Aorta (tissue), 5 donors: ENCODE measurements at regions of chr18 and their contacts with region 1.

Region 1: DNA sequence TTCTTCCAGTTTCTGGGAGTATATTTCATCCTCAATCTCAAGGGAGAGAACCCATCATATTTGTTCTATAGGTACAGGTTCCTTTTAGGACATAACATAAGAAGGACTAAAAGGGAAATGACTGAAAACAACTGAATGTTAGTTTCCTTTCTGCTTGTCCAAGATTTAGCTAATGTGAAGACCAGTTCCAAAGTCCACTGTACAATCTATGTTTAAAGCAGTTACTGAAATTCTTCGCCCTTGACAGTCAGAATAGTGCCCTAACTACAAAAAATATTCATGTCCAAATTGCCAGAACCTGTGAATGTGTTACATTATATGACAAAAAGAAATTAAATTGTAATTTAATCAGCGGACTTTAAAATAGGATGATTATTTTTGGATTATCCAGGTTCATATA is 466.3 kb upstream of the SETBP1 start:
- DNase-seq: no peak
- ATAC-seq: no peak
- H3K4me3 ChIP-seq: no peak overlapping the region
- H3K27ac ChIP-seq: no peak overlapping the region
- H3K4me1 ChIP-seq: no peaks in the 10 kb centered on the region
- H3K27me3 ChIP-seq: no peaks in the 10 kb centered on the region

Region 2: GRCh38 chr18:44107187-44107586 is 107.2 kb before region 1 on chr18:
- intact Hi-C with region 1: no loop called
- DNase-seq: no peak
- ATAC-seq: no peak
- H3K4me3 ChIP-seq: no peak overlapping the region
- H3K27ac ChIP-seq: no peak overlapping the region
- H3K4me1 ChIP-seq: no peaks in the 10 kb centered on the region
- H3K27me3 ChIP-seq: no peaks in the 10 kb centered on the region

Region 3: GRCh38 chr18:44229693-44230108 is 15.3 kb after region 1 on chr18:
- intact Hi-C with region 1: loop called in 1 of 2 experiments (anchors 1 kb)
- DNase-seq: peak; percentile 82 to 89
- ATAC-seq: peak; percentile 84
- H3K4me3 ChIP-seq: no peak overlapping the region
- H3K27ac ChIP-seq: no peak overlapping the region
- H3K4me1 ChIP-seq: no peaks in the 10 kb centered on the region
- H3K27me3 ChIP-seq: no peaks in the 10 kb centered on the region

Region 4: GRCh38 chr18:45212181-45213039 is 998.0 kb after region 1 on chr18:
- intact Hi-C with region 1: no loop called
- DNase-seq: peak; percentile 82 to 88
- ATAC-seq: peak; percentile 92
- H3K4me3 ChIP-seq: no peak overlapping the region
- H3K27ac ChIP-seq: no peak overlapping the region
- H3K4me1 ChIP-seq: no peaks in the 10 kb centered on the region
- H3K27me3 ChIP-seq: no peaks in the 10 kb centered on the region